ENCODE measurements at regions of chr5 and their contacts with region 1.

Region 1: GRCh38 chr5:446864-447263 is 3.9 kb downstream of the EXOC3 start:
- DNase-seq: no peak
- H3K4me3 Mint-ChIP-seq: no peak overlapping the region
- H3K27ac Mint-ChIP-seq: no peak overlapping the region
- H3K4me1 Mint-ChIP-seq: peaks cover 30% of the 10 kb centered on the region
- H3K27me3 Mint-ChIP-seq: no peaks in the 10 kb centered on the region

Region 2: GRCh38 chr5:472656-473553 is 26.0 kb after region 1 on chr5:
- CTCF ChIA-PET with region 1: interaction called, 14 read pairs
- POLR2A ChIA-PET with region 1: interaction called, 5 read pairs
- DNase-seq: peak; percentile 88
- H3K4me3 Mint-ChIP-seq: peak overlapping the region; percentile 70
- H3K27ac Mint-ChIP-seq: peak overlapping the region; percentile 54
- H3K4me1 Mint-ChIP-seq: peaks cover 23% of the 10 kb centered on the region
- H3K27me3 Mint-ChIP-seq: peaks cover 4% of the 10 kb centered on the region

Region 3: DNA sequence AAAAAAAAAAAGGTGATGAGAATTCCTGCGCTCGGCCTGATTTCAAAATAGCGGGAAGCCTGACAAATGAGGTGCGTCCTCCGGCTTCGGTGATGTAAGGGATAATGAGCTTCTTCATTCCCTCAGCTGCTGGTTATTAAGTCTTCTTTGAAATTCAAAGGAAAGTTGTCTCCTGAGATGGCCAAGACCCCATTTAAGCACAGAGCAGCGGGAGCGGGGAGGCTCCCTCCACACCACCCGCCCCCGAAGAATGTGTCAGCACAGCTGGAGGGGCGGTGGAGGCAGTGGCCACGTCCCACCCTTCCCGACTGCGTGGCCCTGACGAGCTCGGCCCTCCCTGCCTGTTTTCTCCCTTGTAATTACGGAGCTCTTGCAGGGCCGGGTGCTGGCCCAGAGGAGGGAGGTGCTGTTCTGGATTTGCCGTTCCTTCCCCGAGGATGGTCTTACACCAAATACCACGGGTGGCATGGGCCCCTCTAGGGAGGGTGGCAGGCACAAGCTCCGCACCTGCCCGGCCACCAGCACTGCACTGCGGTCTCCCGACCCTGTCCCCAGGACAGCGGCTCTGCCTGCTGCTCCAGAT is 46.3 kb after region 1 on chr5:
- CTCF ChIA-PET with region 1: no interaction called
- POLR2A ChIA-PET with region 1: no interaction called
- DNase-seq: no peak
- H3K4me3 Mint-ChIP-seq: no peak overlapping the region
- H3K27ac Mint-ChIP-seq: no peak overlapping the region
- H3K4me1 Mint-ChIP-seq: no peaks in the 10 kb centered on the region
- H3K27me3 Mint-ChIP-seq: no peaks in the 10 kb centered on the region